Pancreas (tissue), 10 donors: ENCODE measurements at regions of chr3 and their contacts with region 1.

Region 1: GRCh38 chr3:15439476-15439875 is 12.1 kb downstream of the EAF1 start:
- DNase-seq: no peak
- ATAC-seq: no peak
- H3K4me3 ChIP-seq: no peak overlapping the region
- H3K27ac ChIP-seq: no peak overlapping the region
- H3K4me1 ChIP-seq: no peaks in the 10 kb centered on the region
- H3K27me3 ChIP-seq: no peaks in the 10 kb centered on the region
- CTCF ChIP-seq: no peak

Region 2: GRCh38 chr3:15542614-15543013 is 103.1 kb after region 1 on chr3:
- intact Hi-C with region 1: loop called in 1 of 3 experiments (anchors 10 kb)
- DNase-seq: no peak
- ATAC-seq: peak in 3 of 4 donors; percentile 53 to 73 (median 65)
- H3K4me3 ChIP-seq: no peak overlapping the region
- H3K27ac ChIP-seq: no peak overlapping the region
- H3K4me1 ChIP-seq: no peaks in the 10 kb centered on the region
- H3K27me3 ChIP-seq: no peaks in the 10 kb centered on the region
- CTCF ChIP-seq: no peak

Region 3: DNA sequence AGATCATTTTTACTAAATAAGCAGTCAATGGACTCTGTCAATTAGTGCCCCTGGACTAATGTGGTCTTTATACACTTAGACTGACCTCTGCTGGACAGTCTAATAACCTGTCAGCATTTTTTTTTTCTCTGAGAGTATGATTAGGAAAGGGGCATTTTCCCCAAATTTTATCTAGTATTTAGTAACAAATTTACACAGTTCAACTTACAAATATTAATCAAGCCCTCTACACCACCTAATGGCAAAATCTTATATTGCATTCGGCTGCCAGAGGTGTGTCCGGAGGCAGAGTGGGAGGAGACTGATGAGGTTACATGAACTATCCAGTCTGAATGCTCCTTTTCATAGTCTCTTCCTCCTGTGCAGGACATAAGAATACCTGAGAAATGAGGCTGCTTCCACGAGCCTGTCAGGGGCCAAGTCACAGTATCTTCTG is 118.1 kb after region 1 on chr3:
- intact Hi-C with region 1: loop called in 1 of 3 experiments (anchors 10 kb)
- DNase-seq: peak in 3 of 6 donors; percentile 27 to 69 (median 46)
- ATAC-seq: peak; percentile 63 to 95 (median 94)
- H3K4me3 ChIP-seq: no peak overlapping the region
- H3K27ac ChIP-seq: no peak overlapping the region
- H3K4me1 ChIP-seq: peaks cover 0 to 8% (median 0%) of the 10 kb centered on the region in 3 donors
- H3K27me3 ChIP-seq: no peaks in the 10 kb centered on the region
- CTCF ChIP-seq: peak; percentile 22 to 63 (median 52)